GM18951 (cell line): ENCODE measurements at regions of chr12 and their contacts with region 1.

Region 1: DNA sequence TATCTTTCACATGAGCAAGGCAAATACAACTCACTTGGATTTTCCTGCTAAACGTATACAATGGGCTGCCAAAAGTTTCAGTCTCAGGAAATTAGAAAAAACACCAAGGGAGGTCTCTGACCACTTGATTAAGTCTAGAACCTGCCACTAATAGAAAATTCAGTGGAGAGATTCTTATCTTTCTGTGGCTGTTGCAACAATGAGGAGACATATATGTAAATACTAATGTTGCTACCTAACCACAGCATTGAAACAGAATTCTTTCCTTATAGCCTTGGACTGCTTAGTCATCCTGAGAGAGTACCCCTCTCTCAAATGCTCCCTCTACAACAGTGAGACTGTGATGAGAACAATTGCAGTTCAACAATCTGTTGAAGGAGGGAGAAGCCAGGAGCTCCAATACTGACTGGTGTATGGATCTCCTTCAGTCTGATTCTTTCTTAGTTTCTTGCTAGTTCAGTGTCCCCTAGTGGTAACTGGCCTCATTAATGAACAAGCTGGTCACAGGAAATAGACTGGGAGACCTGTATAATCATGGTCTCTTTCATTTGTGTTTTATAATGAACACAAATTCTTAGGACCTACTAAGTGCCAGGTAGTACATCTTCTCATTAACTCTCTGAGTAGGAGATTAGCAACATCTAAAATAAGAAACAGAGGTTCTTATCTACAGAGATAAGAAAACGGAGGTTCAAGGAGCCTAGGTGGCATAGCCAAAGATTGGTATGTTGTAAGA is 164.5 kb downstream of the SLC38A4 start:
- POLR2A ChIP-seq: no peak

Region 2: GRCh38 chr12:46357438-46358324 is 303.6 kb before region 1 on chr12:
- in situ Hi-C with region 1: loop called (anchors 10 kb)
- POLR2A ChIP-seq: no peak